ENCODE measurements at regions of chr6 and their contacts with region 1.

Region 1: GRCh38 chr6:127302728-127303660 is 36.3 kb downstream of the RNF146 start:
- DNase-seq: peak; percentile 32
- H3K4me3 Mint-ChIP-seq: no peak overlapping the region
- H3K27ac Mint-ChIP-seq: no peak overlapping the region
- H3K4me1 Mint-ChIP-seq: no peaks in the 10 kb centered on the region
- H3K27me3 Mint-ChIP-seq: no peaks in the 10 kb centered on the region
- CTCF ChIP-seq: no peak

Region 2: GRCh38 chr6:127243501-127243900 is 59.5 kb before region 1 on chr6:
- CTCF ChIA-PET with region 1: no interaction called
- intact Hi-C with region 1: no loop called
- DNase-seq: no peak
- H3K4me3 Mint-ChIP-seq: no peak overlapping the region
- H3K27ac Mint-ChIP-seq: no peak overlapping the region
- H3K4me1 Mint-ChIP-seq: no peaks in the 10 kb centered on the region
- H3K27me3 Mint-ChIP-seq: no peaks in the 10 kb centered on the region
- CTCF ChIP-seq: no peak

Region 3: GRCh38 chr6:127420556-127420955 is 117.6 kb after region 1 on chr6:
- CTCF ChIA-PET with region 1: no interaction called
- intact Hi-C with region 1: loop called (anchors 2 kb)
- DNase-seq: peak; percentile 64
- H3K4me3 Mint-ChIP-seq: no peak overlapping the region
- H3K27ac Mint-ChIP-seq: peak overlapping the region; percentile 60
- H3K4me1 Mint-ChIP-seq: peaks cover 29% of the 10 kb centered on the region
- H3K27me3 Mint-ChIP-seq: no peaks in the 10 kb centered on the region
- CTCF ChIP-seq: no peak

Region 4: GRCh38 chr6:127464881-127465459 is 162.0 kb after region 1 on chr6:
- CTCF ChIA-PET with region 1: interaction called, 4 read pairs
- intact Hi-C with region 1: loop called (anchors 2 kb)
- DNase-seq: peak; percentile 71
- H3K4me3 Mint-ChIP-seq: no peak overlapping the region
- H3K27ac Mint-ChIP-seq: no peak overlapping the region
- H3K4me1 Mint-ChIP-seq: no peaks in the 10 kb centered on the region
- H3K27me3 Mint-ChIP-seq: no peaks in the 10 kb centered on the region
- CTCF ChIP-seq: peak; percentile 65

Region 5: DNA sequence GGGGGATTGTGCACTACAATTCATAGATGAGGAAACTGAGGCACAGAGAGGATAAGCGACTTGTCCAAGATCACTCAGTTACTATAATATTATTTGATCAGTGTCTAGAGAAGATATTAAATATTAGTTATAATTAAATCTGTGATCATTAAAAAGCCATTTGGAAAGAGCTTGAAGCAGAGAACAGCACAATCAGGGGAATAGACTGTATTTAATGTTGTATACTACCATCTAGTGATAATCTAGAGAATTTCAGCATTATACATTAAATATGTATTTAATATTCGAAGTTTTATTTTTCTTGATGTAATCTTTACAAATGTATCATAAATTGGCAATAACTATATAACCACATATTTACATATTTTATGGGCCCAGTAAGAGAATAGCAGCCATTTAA is 236.3 kb after region 1 on chr6:
- CTCF ChIA-PET with region 1: no interaction called
- intact Hi-C with region 1: loop called (anchors 5 kb)
- DNase-seq: no peak
- H3K4me3 Mint-ChIP-seq: no peak overlapping the region
- H3K27ac Mint-ChIP-seq: no peak overlapping the region
- H3K4me1 Mint-ChIP-seq: no peaks in the 10 kb centered on the region
- H3K27me3 Mint-ChIP-seq: no peaks in the 10 kb centered on the region
- CTCF ChIP-seq: no peak

Measured in Calu3 (cell line).